ENCODE measurements at regions of chr3 and their contacts with region 1.

Region 1: GRCh38 chr3:4670352-4670751 is 177.2 kb downstream of the ITPR1 start:
- DNase-seq: no peak
- H3K4me3 ChIP-seq: no peak overlapping the region
- H3K27ac ChIP-seq: no peak overlapping the region
- H3K4me1 ChIP-seq: no peaks in the 10 kb centered on the region
- H3K27me3 ChIP-seq: no peaks in the 10 kb centered on the region
- CTCF ChIP-seq: peak; percentile 56 to 72 (median 65)
- EP300 ChIP-seq: no peak
- POLR2A ChIP-seq: no peak
- RAD21 ChIP-seq: peak; percentile 55 to 66

Region 2: GRCh38 chr3:4303187-4304123 is 366.9 kb before region 1 on chr3 and contains the start of gene SETMAR:
- CTCF ChIA-PET with region 1: no interaction called
- POLR2A ChIA-PET with region 1: no interaction called
- DNase-seq: peak; percentile 62 to 93
- H3K4me3 ChIP-seq: peak within 1 kb of the TSS; percentile 60 to 93 (median 82)
- H3K27ac ChIP-seq: peak within 1 kb of the TSS; percentile 78
- H3K4me1 ChIP-seq: peaks cover 0 to 3% (median under 1%) of the 10 kb centered on the region in 4 experiments; a peak in 4 of 7 replicates
- H3K27me3 ChIP-seq: no peaks in the 10 kb centered on the region
- CTCF ChIP-seq: no peak
- EP300 ChIP-seq: 0 out of 3 replicates have a peak, but pooled peaks of 1 of the 2 experiments have one; percentile 1
- POLR2A ChIP-seq: peak; percentile 88 to 94
- RAD21 ChIP-seq: no peak
- total RNA-seq, gene SETMAR: 25.3 and 25.6 TPM in 2 replicates

Region 3: DNA sequence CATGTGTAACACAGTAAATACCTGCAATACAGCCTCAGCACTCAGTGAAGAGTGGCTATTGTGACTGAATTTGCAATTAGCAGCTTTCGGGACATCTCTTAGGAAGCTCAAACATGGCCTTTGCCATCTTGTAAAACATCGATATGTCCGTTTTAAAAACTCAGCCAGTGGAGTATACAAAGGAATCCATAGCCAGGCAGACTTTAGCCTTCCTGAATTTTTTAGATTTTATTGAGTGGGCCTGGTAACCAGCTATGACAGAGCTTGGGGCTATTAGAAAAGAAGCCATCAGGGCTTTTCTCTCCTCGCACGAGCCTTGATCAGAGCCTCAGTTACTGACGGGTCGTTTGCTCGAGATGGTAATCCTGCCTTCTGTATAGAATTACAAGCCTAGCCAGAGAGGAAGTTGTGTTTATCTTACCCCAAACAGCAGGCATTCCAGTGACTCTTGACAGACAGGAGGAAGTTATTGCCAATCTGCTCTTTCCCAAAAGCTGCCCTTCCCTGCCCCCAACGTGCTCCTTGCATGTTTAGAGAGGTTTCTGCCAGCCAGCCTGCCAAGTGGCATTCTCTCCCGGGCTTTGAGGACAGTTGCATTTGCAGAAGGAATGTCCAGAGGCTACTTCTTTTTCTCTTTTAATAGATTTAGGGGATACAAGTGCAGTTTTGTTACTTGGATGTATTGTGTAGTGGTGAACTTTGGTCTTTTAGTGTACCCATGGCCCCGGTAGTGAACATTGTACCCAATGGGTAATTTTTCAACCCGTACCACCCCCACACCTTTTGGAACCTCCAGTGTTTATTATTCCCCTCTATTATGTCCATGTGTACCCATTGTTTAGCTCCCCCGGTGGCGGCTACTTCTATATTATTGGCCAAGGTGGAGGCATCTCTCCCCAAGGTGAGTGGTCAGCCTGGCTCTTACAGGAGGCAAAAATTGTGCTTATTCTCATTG is 136.6 kb before region 1 on chr3:
- CTCF ChIA-PET with region 1: no interaction called
- POLR2A ChIA-PET with region 1: no interaction called
- DNase-seq: no peak
- H3K4me3 ChIP-seq: no peak overlapping the region
- H3K27ac ChIP-seq: no peak overlapping the region
- H3K4me1 ChIP-seq: peaks cover 1 to 6% (median 4%) of the 10 kb centered on the region in 4 experiments; a peak in 4 of 7 replicates
- H3K27me3 ChIP-seq: no peaks in the 10 kb centered on the region
- CTCF ChIP-seq: peak in 1 of 3 experiments; percentile 26; a peak in 1 of 4 replicates
- EP300 ChIP-seq: no peak
- POLR2A ChIP-seq: no peak
- RAD21 ChIP-seq: no peak

Region 4: DNA sequence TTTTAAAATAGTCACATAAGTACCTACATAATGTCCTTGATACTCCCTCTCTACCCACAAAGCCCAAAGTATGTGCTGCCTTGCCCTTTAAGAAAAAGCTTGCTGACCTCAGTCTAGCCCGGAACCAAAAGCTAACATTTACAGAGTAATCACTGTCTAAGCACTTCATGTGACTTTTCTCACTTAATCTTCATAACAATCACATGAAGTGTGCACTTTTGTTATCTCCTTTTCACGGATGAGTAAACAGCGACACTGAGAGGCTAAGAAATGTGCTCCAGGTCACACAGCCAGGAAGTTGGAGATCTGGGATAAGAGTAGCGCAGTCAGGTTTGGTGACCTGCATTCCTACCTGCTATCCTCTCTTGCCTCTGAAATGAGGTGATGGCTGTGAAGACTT is 16.8 kb after region 1 on chr3:
- CTCF ChIA-PET with region 1: interaction called, 44 read pairs
- POLR2A ChIA-PET with region 1: no interaction called
- DNase-seq: no peak
- H3K4me3 ChIP-seq: no peak overlapping the region
- H3K27ac ChIP-seq: no peak overlapping the region
- H3K4me1 ChIP-seq: no peaks in the 10 kb centered on the region
- H3K27me3 ChIP-seq: no peaks in the 10 kb centered on the region; a peak in 1 of 7 replicates
- CTCF ChIP-seq: no peak
- EP300 ChIP-seq: no peak
- POLR2A ChIP-seq: no peak
- RAD21 ChIP-seq: no peak

Region 5: GRCh38 chr3:4751502-4752101 is 81.2 kb after region 1 on chr3:
- CTCF ChIA-PET with region 1: no interaction called
- POLR2A ChIA-PET with region 1: no interaction called
- DNase-seq: no peak
- H3K4me3 ChIP-seq: no peak overlapping the region
- H3K27ac ChIP-seq: no peak overlapping the region
- H3K4me1 ChIP-seq: peaks cover 0 to 3% (median 3%) of the 10 kb centered on the region in 4 experiments; a peak in 3 of 7 replicates
- H3K27me3 ChIP-seq: no peaks in the 10 kb centered on the region
- CTCF ChIP-seq: no peak
- EP300 ChIP-seq: no peak
- POLR2A ChIP-seq: no peak
- RAD21 ChIP-seq: no peak

Region 6: DNA sequence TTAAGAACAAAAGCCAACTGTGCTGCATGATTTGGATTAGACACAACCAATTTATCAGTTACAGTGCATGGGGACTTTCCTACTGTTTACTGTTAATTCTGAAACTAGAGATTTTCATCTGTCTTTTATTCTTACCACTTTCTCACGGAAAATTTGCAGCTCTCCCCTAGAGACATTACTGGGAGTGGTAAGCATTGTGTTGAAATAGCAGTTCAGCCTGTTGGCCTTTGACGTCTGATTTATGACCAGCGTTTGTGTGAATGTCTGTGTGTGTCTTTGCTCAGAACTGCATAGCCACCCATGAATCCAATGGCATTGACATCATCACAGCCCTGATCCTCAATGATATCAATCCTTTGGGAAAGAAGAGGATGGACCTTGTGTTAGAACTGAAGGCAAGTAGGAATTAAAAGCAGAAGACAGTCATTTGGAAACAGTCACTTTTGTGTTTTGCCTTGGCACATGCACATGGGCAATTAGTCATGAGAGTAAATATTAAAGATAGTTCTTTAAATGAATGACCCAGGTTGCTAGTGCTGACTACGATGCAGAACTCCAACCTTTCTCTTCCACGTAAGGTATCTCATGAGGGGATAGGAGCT is 106.7 kb after region 1 on chr3:
- CTCF ChIA-PET with region 1: no interaction called
- POLR2A ChIA-PET with region 1: no interaction called
- DNase-seq: no peak
- H3K4me3 ChIP-seq: no peak overlapping the region
- H3K27ac ChIP-seq: no peak overlapping the region
- H3K4me1 ChIP-seq: no peaks in the 10 kb centered on the region
- H3K27me3 ChIP-seq: no peaks in the 10 kb centered on the region
- CTCF ChIP-seq: no peak
- EP300 ChIP-seq: no peak
- POLR2A ChIP-seq: no peak
- RAD21 ChIP-seq: no peak